ENCODE measurements at regions of chr1 and their contacts with region 1.

Region 1: GRCh38 chr1:94068999-94069918 is 51.7 kb downstream of the ABCA4 start:
- DNase-seq: peak; percentile 58 to 97
- H3K4me3 ChIP-seq: no peak overlapping the region
- H3K27ac ChIP-seq: peak overlapping the region; percentile 89
- H3K4me1 ChIP-seq: peaks cover 54% of the 10 kb centered on the region
- H3K27me3 ChIP-seq: no peaks in the 10 kb centered on the region
- CTCF ChIP-seq: no peak

Region 2: GRCh38 chr1:93338421-93338820 is 730.8 kb before region 1 on chr1:
- CTCF ChIA-PET with region 1: no interaction called
- POLR2A ChIA-PET with region 1: interaction called, 20 read pairs
- intact Hi-C with region 1: no loop called
- DNase-seq: peak; percentile 58 to 96
- H3K4me3 ChIP-seq: peak overlapping the region; percentile 16; the same call in 1 of the 2 replicates
- H3K27ac ChIP-seq: peak overlapping the region; percentile 83
- H3K4me1 ChIP-seq: peaks cover 42% of the 10 kb centered on the region
- H3K27me3 ChIP-seq: no peaks in the 10 kb centered on the region
- CTCF ChIP-seq: no peak

Region 3: DNA sequence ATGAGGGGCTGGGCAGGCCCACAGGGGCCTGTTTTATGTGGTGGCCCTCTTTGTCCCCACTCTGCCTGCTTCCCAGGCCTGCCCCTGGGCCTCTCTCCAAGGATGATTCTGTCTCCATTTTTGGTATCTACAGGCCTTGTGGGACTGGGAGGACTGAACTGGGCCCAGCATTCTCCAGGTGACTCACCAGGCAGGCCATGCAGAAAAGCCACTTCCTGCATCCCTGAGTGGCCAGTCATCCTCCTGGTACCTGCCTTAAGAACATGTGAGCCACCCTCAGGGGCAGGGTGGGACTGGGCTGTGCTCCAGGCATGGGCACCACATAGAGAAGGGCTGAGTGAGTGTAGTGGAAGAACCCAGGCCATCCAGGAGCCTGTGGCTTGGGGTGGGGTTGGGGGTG is 367.6 kb before region 1 on chr1:
- CTCF ChIA-PET with region 1: no interaction called
- POLR2A ChIA-PET with region 1: interaction called, 12 read pairs
- intact Hi-C with region 1: no loop called
- DNase-seq: peak; percentile 97 to 100
- H3K4me3 ChIP-seq: no peak overlapping the region
- H3K27ac ChIP-seq: peak overlapping the region; percentile 97
- H3K4me1 ChIP-seq: peaks cover 68% of the 10 kb centered on the region
- H3K27me3 ChIP-seq: no peaks in the 10 kb centered on the region
- CTCF ChIP-seq: no peak

Region 4: GRCh38 chr1:94105957-94106529 is 36.8 kb after region 1 on chr1:
- CTCF ChIA-PET with region 1: interaction called, 3 read pairs
- POLR2A ChIA-PET with region 1: interaction called, 14 read pairs
- intact Hi-C with region 1: loop called (anchors 1 kb)
- DNase-seq: peak in 1 of 2 experiments; percentile 50
- H3K4me3 ChIP-seq: no peak overlapping the region
- H3K27ac ChIP-seq: peak overlapping the region; percentile 54
- H3K4me1 ChIP-seq: peaks cover 47% of the 10 kb centered on the region
- H3K27me3 ChIP-seq: no peaks in the 10 kb centered on the region
- CTCF ChIP-seq: no peak

Region 5: DNA sequence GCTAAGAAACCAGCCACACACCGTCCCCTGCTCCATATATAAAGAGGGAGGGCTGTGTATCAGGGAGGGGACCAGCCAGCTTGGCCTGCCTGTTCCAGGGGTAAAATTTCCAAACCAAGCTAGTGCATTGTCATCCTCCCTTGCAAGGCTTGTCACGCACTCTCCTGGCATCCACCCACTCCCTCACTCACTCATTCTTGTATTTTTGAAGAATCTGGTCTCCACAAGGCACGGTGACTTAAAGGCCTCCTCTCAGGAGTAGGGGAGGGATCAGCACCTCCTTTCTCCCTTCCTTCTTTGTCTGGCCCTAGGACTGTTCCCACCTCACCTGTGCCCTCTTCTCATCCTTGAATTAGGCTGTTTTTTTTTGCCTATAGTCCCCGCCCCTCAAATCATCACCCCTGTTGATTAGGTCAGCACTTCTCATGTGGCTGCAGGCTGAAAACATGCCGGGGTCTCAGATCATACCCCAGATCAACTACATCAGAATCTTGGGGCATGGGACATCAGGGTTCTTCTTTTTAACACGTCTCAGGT is 46.7 kb after region 1 on chr1:
- CTCF ChIA-PET with region 1: no interaction called
- POLR2A ChIA-PET with region 1: interaction called, 6 read pairs
- intact Hi-C with region 1: loop called (anchors 1 kb)
- DNase-seq: no peak
- H3K4me3 ChIP-seq: no peak overlapping the region
- H3K27ac ChIP-seq: peak overlapping the region; percentile 39
- H3K4me1 ChIP-seq: peaks cover 49% of the 10 kb centered on the region
- H3K27me3 ChIP-seq: no peaks in the 10 kb centered on the region
- CTCF ChIP-seq: no peak

Region 6: GRCh38 chr1:94160811-94161210 is 91.6 kb after region 1 on chr1:
- CTCF ChIA-PET with region 1: no interaction called
- POLR2A ChIA-PET with region 1: no interaction called
- intact Hi-C with region 1: loop called (anchors 5 kb)
- DNase-seq: peak in 1 of 2 experiments; percentile 61
- H3K4me3 ChIP-seq: no peak overlapping the region
- H3K27ac ChIP-seq: no peak overlapping the region
- H3K4me1 ChIP-seq: no peaks in the 10 kb centered on the region
- H3K27me3 ChIP-seq: no peaks in the 10 kb centered on the region
- CTCF ChIP-seq: no peak

Region 7: DNA sequence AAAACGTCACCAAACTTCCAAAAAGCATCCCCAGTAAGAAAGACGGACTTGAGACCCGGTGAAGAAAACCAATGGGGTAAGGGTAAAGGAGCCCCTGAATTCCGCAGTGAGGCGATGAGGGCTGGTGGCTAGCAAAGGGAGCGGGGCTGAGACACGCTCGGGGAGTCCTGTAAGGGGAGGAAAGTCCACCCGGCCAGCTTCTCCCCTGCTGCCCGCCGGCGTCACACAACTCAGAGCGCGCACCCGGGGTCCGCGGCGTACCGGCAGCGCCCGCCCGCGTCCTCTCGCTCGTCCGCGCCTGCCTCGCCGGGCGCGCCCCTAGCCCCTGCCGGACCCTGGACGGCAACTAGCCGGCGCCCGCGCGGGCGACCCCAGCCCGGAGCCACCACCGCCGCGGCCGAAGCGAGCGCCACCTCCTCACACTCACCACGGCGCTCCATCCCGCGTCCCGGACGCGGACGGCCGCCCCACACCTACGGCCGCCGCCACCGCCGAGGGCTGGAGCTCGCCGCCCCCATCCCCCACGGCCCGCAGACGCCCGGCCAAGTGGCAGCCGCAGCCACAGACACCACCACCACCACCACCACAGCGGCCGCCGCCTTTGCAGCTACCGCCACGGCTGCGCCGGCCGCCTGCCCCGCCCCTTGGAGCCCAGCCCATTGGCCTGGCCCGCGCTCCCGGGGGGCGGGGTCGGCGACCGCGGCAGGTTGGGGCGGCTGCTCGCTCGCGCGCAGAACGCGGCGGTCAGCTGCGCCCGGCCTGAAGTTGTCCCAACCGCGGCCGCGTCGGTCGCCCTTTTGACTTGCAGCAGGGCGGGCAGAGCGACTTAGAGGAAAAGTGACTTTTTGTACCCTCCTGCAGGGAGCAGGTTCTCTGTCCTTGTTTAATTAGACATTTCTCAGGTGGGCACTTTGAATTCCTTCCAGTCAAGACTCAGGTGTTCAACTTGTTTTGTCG is 178.2 kb after region 1 on chr1:
- CTCF ChIA-PET with region 1: interaction called, 5 read pairs
- POLR2A ChIA-PET with region 1: interaction called, 5 read pairs
- intact Hi-C with region 1: loop called (anchors 5 kb)
- DNase-seq: peak; percentile 78 to 93
- H3K4me3 ChIP-seq: peak overlapping the region; percentile 84
- H3K27ac ChIP-seq: peak overlapping the region; percentile 91
- H3K4me1 ChIP-seq: peaks cover 70% of the 10 kb centered on the region
- H3K27me3 ChIP-seq: no peaks in the 10 kb centered on the region
- CTCF ChIP-seq: no peak

Measured in PC-9 (cell line).